ENCODE measurements at regions of chr2 and their contacts with region 1.

Region 1: GRCh38 chr2:204681412-204681811 is 136.1 kb downstream of the PARD3B start:
- DNase-seq: no peak
- ATAC-seq: no peak
- H3K4me3 ChIP-seq: no peak overlapping the region
- H3K27ac ChIP-seq: no peak overlapping the region
- H3K4me1 ChIP-seq: peaks cover 2% of the 10 kb centered on the region
- H3K27me3 ChIP-seq: no peaks in the 10 kb centered on the region

Region 2: DNA sequence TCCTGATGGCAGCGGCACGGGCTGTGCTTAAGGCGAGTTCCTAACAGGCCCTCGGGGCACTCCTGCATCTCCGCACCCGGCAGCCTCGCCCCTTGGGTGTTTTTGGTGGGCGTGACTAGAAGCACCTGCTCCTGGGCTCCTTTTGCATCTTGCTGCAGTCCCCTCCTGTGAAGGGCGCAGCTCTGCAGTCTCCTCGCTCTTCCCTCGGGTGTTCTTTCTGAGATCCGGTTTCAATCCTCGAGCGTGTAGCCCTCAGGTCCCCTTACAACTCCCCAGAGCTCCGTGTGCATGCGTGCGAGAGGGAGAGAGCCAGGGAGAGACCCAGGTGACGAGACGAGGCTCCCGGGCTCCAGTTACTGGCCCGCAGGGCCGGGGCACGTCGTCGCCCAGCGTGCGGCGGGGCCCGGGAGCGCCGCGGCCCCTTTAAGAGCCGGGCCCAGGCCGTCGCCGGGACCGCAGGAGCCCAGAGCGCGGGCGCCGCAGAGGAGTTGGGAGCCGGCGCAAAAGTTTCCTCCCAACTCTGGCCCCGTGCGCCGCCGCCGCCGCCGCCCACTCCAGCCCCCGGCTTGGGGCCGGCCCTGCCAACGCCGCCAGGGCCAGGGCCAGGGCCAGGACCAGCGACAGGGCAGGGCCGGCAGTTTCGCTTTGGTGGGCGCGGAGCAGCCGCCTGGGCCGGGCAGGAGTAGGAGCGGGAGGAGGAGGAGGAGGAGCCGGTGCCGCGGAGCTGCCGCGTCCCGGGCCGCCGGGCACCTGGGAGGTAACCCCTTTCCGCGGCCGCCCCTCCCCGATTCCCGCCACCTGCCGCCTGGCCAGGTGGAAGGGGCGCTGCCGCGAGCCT is 136.2 kb before region 1 on chr2 and contains the start of gene PARD3B:
- intact Hi-C with region 1: loop called in 1 of 4 experiments (anchors 10 kb)
- DNase-seq: peak; percentile 71 to 88 (median 87)
- ATAC-seq: peak; percentile 97 to 99
- H3K4me3 ChIP-seq: peak within 1 kb of the TSS; percentile 99
- H3K27ac ChIP-seq: peak within 1 kb of the TSS; percentile 61
- H3K4me1 ChIP-seq: peaks cover under 1% of the 10 kb centered on the region
- H3K27me3 ChIP-seq: no peaks in the 10 kb centered on the region
- total RNA-seq, gene PARD3B: 13.0 to 18.6 (median 16.0) TPM

Region 3: DNA sequence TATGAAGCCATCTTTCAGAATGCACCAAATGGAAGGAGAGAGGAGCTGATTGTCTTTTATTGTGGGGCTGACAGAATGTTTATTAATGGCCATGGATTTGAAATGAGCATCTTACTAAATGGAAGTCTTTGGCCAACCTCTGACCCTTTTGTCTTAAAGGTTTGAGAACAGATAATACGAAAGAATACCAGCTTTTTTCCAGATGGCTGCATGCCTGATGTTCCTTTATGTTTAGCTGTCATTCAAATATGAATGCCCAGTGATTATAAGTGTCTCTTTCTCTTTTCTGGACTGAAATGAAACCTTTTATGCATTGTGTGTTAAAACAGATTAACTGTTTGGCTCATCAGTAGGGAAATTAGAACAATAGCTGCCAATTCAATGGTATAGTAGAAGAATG is 90.2 kb before region 1 on chr2:
- intact Hi-C with region 1: no loop called
- DNase-seq: no peak
- ATAC-seq: no peak
- H3K4me3 ChIP-seq: no peak overlapping the region
- H3K27ac ChIP-seq: no peak overlapping the region
- H3K4me1 ChIP-seq: no peaks in the 10 kb centered on the region
- H3K27me3 ChIP-seq: no peaks in the 10 kb centered on the region

Measured in right cardiac atrium (tissue), 5 donors.